Right ventricle myocardium inferior (tissue), 1 donor: ENCODE measurements at regions of chr12 and their contacts with region 1.

Region 1: DNA sequence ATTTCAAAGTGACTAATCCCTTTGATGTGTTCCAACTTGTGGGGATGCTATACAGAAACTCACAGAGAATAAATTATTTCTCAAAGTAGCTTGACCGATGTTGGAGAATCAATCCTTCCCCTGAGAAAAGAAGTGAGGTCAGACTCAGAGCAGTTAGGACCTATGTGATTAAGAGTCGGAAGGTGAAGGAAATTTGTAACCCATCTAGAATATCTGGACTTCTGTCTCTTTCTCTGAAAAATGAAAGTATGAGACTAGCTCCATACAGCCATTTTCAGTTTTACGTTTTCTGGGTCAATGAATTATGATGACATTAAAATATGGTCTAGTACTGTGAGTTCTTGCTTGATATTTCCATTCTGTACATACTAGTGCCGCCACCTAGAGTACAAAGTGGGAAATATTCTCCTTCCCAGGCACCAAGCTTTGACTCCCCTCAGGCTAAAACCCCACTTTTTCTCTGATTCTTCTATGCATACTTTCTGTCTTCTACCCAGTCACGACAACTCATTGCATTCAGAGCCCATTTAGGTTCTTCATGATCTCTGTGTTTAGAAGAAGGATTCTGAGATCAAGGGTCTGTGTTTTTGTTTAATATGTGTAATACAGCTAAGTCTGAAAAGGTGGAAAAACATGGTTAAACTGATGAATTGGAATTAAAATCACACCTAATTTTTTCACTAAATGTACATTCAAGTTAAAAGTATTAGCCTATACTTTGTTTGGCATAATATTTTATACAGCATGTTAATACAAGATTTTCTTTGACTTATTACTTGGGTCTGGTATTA is 6.9 kb upstream of the NTS start:
- DNase-seq: no peak
- ATAC-seq: peak; percentile 88

Region 2: DNA sequence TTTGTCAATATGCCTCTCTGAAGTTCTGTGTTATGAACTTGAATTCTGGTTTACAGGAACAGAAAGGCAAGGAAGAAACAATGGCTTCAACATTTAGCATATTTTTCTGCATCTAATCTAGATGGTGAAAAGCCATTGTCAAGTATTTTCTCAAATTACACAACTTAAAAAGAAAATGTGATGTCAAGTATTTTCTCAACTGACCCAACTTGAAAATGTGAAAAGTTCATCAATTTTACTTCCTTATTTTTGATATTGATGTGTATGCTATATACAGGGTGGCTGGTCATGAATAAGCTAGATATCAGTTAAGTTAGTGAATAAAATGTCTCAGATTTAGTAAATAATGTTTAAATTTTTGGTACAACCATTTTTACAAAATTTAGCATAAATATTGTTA is 390.4 kb before region 1 on chr12:
- intact Hi-C with region 1: loop called (anchors 2 kb)
- DNase-seq: no peak
- ATAC-seq: no peak

Region 3: GRCh38 chr12:85575120-85576096 is 291.8 kb before region 1 on chr12:
- intact Hi-C with region 1: loop called (anchors 1 kb)
- DNase-seq: no peak
- ATAC-seq: peak; percentile 65

Region 4: GRCh38 chr12:85725991-85726390 is 141.2 kb before region 1 on chr12:
- intact Hi-C with region 1: loop called (anchors 10 kb)
- DNase-seq: no peak
- ATAC-seq: no peak

Region 5: GRCh38 chr12:85814116-85814515 is 53.1 kb before region 1 on chr12:
- intact Hi-C with region 1: loop called (anchors 2 kb)
- DNase-seq: no peak
- ATAC-seq: no peak